ENCODE measurements at regions of chr4 and their contacts with region 1.

Region 1: GRCh38 chr4:21134994-21135393 is 434.7 kb downstream of the PACRGL start:
- DNase-seq: no peak
- H3K4me3 ChIP-seq: no peak overlapping the region
- H3K4me3 Mint-ChIP-seq: no peak overlapping the region
- H3K27ac ChIP-seq: no peak overlapping the region
- H3K27ac Mint-ChIP-seq: peak overlapping the region in 1 of 8 donors; percentile 11
- H3K4me1 ChIP-seq: no peaks in the 10 kb centered on the region
- H3K4me1 Mint-ChIP-seq: no peaks in the 10 kb centered on the region
- H3K27me3 ChIP-seq: no peaks in the 10 kb centered on the region
- H3K27me3 Mint-ChIP-seq: no peaks in the 10 kb centered on the region

Region 2: DNA sequence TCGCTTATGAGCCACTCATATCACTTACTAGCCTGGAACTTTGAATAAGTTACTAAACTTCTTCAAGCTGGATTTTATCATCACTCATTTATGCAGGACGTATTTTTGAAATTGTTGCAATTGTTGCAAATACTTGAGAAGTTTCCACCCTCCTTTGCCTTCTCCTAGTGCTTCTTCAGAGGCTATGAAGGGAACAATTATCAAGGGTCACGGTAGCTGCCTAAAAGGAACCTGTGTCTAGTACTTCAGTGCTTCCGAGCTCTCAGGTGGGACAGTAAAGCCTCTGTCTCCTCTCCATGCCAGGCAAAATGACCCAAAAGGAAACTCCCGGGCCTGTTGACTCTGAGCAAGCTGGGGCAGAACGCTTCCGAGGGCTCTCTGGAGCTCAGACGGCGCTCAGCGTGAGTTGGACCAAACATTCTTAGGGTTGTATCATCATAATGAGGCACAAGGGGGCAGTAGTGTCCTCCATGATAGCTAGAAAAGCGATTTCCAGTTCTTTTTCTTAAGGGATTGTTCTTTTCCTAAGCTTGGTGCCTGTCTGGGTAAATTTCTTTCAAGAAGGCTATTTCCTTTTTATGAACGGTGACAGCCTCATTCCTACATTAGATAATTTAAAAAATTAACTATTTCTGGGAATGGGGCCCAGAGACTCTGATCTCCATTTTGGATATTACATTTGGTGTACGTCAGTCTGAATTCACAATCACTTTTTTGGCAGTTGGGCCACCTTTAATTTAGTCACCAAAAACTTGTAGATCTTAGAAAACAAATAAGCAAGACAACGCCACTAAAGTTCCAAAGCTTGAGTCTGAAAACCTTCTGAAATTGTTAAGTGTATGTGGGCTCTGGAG is 361.6 kb before region 1 on chr4:
- CTCF ChIA-PET with region 1: interaction called, 34 read pairs
- POLR2A ChIA-PET with region 1: no interaction called
- DNase-seq: peak in 2 of 5 donors; percentile 10
- H3K4me3 ChIP-seq: no peak overlapping the region
- H3K4me3 Mint-ChIP-seq: peak overlapping the region in 2 of 7 donors; percentile 20 to 30
- H3K27ac ChIP-seq: no peak overlapping the region
- H3K27ac Mint-ChIP-seq: peak overlapping the region in 1 of 8 donors; percentile 63
- H3K4me1 ChIP-seq: no peaks in the 10 kb centered on the region
- H3K4me1 Mint-ChIP-seq: peaks cover 0 to 9% (median 3%) of the 10 kb centered on the region in 3 donors
- H3K27me3 ChIP-seq: no peaks in the 10 kb centered on the region
- H3K27me3 Mint-ChIP-seq: peaks cover 0 to 2% of the 10 kb centered on the region in 2 donors